Activated CD4-positive, alpha-beta T cell treated with anti-CD3 and anti-CD28 coated beads for 36 hours (primary cell): ENCODE measurements at regions of chr1 and their contacts with region 1.

Region 1: DNA sequence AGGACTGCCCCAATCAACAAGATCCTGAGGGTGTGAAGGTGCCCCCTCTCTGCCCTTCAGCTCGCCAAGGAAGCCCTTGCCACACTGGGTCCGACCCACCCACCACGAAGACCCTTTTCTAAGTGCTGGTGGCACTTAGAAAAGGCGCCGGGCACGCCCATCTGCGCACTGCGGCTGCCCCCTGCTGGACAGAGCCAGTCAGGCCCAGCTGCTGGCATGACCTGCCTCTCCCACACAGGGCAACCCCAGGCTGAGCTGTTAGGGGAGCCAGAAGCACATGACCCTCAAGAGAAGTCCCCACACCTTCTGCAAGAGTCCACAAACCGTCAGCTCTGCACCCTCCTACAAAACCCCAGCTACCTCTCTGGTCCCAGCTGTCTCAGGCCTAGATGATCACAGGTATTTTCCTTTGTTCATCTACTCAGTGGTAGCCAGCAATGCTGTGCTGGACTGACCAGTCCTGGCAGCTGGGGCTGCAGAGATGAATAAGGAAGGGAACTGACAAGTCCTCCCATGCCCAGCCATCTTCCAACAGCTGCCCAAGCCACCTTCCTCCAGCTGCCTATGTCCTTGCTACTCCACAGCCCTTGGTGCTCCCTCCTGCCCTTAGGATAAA is 40.0 kb upstream of the ZC3H12A start:
- DNase-seq: peak; percentile 88
- ATAC-seq: peak; percentile 97
- H3K4me3 Mint-ChIP-seq: no peak overlapping the region
- H3K27ac Mint-ChIP-seq: no peak overlapping the region
- H3K4me1 Mint-ChIP-seq: no peaks in the 10 kb centered on the region
- H3K27me3 Mint-ChIP-seq: peaks cover 5% of the 10 kb centered on the region

Region 2: GRCh38 chr1:36175137-36176095 is 1259.0 kb before region 1 on chr1:
- CTCF ChIA-PET with region 1: no interaction called
- POLR2A ChIA-PET with region 1: no interaction called
- intact Hi-C with region 1: no loop called
- DNase-seq: no peak
- ATAC-seq: no peak
- H3K4me3 Mint-ChIP-seq: no peak overlapping the region
- H3K27ac Mint-ChIP-seq: no peak overlapping the region
- H3K4me1 Mint-ChIP-seq: peaks cover 13% of the 10 kb centered on the region
- H3K27me3 Mint-ChIP-seq: no peaks in the 10 kb centered on the region

Region 3: GRCh38 chr1:36576118-36576517 is 858.3 kb before region 1 on chr1:
- CTCF ChIA-PET with region 1: interaction called, 3 read pairs
- POLR2A ChIA-PET with region 1: no interaction called
- intact Hi-C with region 1: loop called (anchors 10 kb)
- DNase-seq: peak; percentile 73
- ATAC-seq: peak; percentile 72
- H3K4me3 Mint-ChIP-seq: no peak overlapping the region
- H3K27ac Mint-ChIP-seq: no peak overlapping the region
- H3K4me1 Mint-ChIP-seq: no peaks in the 10 kb centered on the region
- H3K27me3 Mint-ChIP-seq: peaks cover 17% of the 10 kb centered on the region

Region 4: GRCh38 chr1:37020653-37021277 is 413.6 kb before region 1 on chr1:
- CTCF ChIA-PET with region 1: no interaction called
- POLR2A ChIA-PET with region 1: no interaction called
- intact Hi-C with region 1: no loop called
- DNase-seq: peak; percentile 51
- ATAC-seq: no peak
- H3K4me3 Mint-ChIP-seq: no peak overlapping the region
- H3K27ac Mint-ChIP-seq: no peak overlapping the region
- H3K4me1 Mint-ChIP-seq: no peaks in the 10 kb centered on the region
- H3K27me3 Mint-ChIP-seq: peaks cover 16% of the 10 kb centered on the region

Region 5: DNA sequence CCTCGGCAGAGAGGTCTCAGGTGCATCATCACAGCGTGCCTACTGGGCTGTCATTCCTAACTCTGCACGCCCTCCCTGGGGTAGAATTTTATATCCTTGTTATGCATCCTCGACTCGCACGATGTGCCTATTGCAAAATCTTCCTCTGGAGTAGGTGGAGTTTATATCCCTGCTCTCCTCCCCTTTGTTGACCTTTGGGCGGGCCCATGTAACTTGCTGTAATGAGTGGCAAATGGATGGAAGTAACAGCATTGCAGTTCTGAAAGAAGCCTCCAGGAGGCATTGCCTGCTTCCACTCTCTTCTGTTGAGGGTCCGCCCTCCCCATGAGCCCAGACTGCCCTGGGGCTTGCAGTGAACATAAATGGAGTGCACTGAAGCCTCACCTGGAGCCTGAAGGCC is 337.9 kb before region 1 on chr1:
- CTCF ChIA-PET with region 1: no interaction called
- POLR2A ChIA-PET with region 1: no interaction called
- intact Hi-C with region 1: loop called in 1 of 2 experiments (anchors 5 kb)
- DNase-seq: no peak
- ATAC-seq: no peak
- H3K4me3 Mint-ChIP-seq: no peak overlapping the region
- H3K27ac Mint-ChIP-seq: no peak overlapping the region
- H3K4me1 Mint-ChIP-seq: no peaks in the 10 kb centered on the region
- H3K27me3 Mint-ChIP-seq: peaks cover 14% of the 10 kb centered on the region

Region 6: DNA sequence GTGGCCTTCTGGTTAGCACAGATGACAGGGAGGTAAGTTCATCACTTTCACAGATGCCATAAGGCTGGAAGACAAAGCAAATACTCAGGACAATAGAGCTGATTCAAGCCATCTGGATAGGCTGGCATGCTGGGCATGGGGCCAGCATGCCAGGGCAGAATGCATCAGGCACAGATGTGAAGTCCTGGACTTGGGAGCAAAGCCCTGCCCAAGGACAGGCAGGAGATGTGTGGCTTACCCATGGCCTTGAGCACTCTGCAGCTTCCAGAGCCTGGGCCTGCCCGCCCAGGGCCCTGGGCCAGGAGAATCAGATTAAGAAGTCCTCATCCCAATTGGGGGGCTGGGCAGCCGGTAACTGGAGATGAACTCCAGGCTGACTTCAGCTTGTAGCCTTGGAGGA is 95.7 kb before region 1 on chr1:
- CTCF ChIA-PET with region 1: no interaction called
- POLR2A ChIA-PET with region 1: no interaction called
- intact Hi-C with region 1: loop called in 1 of 2 experiments (anchors 10 kb)
- DNase-seq: no peak
- ATAC-seq: no peak
- H3K4me3 Mint-ChIP-seq: no peak overlapping the region
- H3K27ac Mint-ChIP-seq: no peak overlapping the region
- H3K4me1 Mint-ChIP-seq: no peaks in the 10 kb centered on the region
- H3K27me3 Mint-ChIP-seq: peaks cover 8% of the 10 kb centered on the region